MCF 10A (cell line): ENCODE measurements at regions of chr4 and their contacts with region 1.

Region 1: GRCh38 chr4:88533937-88534750 is 10.6 kb upstream of the PYURF start:
- DNase-seq: peak; percentile 61
- H3K4me3 Mint-ChIP-seq: no peak overlapping the region
- H3K27ac Mint-ChIP-seq: no peak overlapping the region
- H3K4me1 Mint-ChIP-seq: peaks cover 7% of the 10 kb centered on the region
- H3K27me3 Mint-ChIP-seq: no peaks in the 10 kb centered on the region
- CTCF ChIP-seq: no peak

Region 2: GRCh38 chr4:87540146-87541058 is 993.7 kb before region 1 on chr4:
- CTCF ChIA-PET with region 1: no interaction called
- POLR2A ChIA-PET with region 1: no interaction called
- intact Hi-C with region 1: no loop called
- DNase-seq: no peak
- H3K4me3 Mint-ChIP-seq: no peak overlapping the region
- H3K27ac Mint-ChIP-seq: no peak overlapping the region
- H3K4me1 Mint-ChIP-seq: no peaks in the 10 kb centered on the region
- H3K27me3 Mint-ChIP-seq: no peaks in the 10 kb centered on the region
- CTCF ChIP-seq: no peak

Region 3: DNA sequence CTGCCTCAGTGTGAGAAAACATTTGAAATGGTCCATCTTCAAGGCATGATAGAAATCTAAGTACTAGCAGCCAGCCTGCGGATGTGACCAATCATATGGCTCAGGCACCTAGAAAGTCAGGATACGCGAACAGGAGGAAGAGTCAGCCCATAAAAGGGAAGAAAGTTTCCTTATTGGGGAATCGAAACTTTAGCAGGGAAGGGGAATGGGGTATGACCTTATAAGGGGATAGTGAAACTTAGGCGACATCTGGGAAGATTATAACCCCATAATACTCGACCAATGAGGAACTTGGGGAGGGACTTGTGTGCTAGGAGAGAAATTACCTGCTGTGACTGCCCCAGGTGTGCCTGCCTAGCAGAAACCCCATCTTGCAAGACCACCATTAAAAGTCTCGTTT is 15.7 kb after region 1 on chr4:
- CTCF ChIA-PET with region 1: interaction called, 15 read pairs
- POLR2A ChIA-PET with region 1: no interaction called
- intact Hi-C with region 1: no loop called
- DNase-seq: no peak
- H3K4me3 Mint-ChIP-seq: no peak overlapping the region
- H3K27ac Mint-ChIP-seq: peak overlapping the region; percentile 71
- H3K4me1 Mint-ChIP-seq: no peaks in the 10 kb centered on the region
- H3K27me3 Mint-ChIP-seq: no peaks in the 10 kb centered on the region
- CTCF ChIP-seq: no peak

Region 4: DNA sequence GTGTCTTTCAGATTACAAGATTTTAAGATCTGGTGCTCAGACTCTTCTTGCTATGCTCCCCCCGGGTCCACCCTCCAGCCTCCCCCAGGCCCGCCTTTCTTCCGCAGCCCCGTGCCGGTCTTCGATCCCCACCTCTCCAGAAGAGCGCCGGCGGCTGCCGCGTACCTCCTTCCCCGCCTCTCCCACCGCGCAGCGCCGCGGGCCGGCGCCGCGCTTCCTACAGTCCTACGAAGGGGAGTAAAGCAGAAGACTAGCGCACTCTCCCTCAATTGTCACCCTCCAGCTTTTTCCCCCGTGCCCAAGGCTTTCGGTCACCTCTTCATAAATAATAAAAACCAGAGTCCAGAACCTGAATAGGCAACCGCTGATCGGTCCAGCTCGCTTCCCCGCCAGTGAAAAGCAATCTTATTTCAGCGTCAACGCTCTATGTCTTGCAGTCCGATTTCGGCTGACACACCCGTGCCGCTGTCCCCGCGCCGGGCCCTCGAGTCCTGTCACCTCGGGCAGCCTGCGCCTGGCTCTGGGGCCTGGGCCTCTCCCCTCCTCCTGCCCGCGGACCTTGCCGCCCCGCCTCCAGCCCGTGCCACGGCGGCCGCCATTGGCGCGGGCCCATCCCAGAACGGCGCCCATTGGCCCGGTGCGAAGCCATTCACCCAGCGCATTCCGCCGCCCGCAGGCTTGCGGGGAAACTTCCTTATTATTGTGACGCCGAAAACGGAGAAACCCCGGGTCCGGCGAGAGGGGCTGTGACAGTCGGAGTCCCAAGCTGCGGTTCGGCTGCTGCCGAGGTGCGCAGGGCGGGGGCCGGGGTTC is 57.8 kb after region 1 on chr4 and contains the start of gene HERC3:
- CTCF ChIA-PET with region 1: interaction called, 20 read pairs
- POLR2A ChIA-PET with region 1: interaction called, 10 read pairs
- intact Hi-C with region 1: loop called (anchors 2 kb)
- DNase-seq: peak; percentile 89
- H3K4me3 Mint-ChIP-seq: peak within 1 kb of the TSS; percentile 83
- H3K27ac Mint-ChIP-seq: peak within 1 kb of the TSS; percentile 77
- H3K4me1 Mint-ChIP-seq: peaks cover 6% of the 10 kb centered on the region
- H3K27me3 Mint-ChIP-seq: no peaks in the 10 kb centered on the region
- CTCF ChIP-seq: no peak
- total RNA-seq, gene HERC3: 34.9 and 64.0 TPM in 2 replicates

Region 5: GRCh38 chr4:88653371-88653946 is 119.3 kb after region 1 on chr4:
- CTCF ChIA-PET with region 1: interaction called, 27 read pairs
- POLR2A ChIA-PET with region 1: interaction called, 3 read pairs
- intact Hi-C with region 1: no loop called
- DNase-seq: no peak
- H3K4me3 Mint-ChIP-seq: no peak overlapping the region
- H3K27ac Mint-ChIP-seq: no peak overlapping the region
- H3K4me1 Mint-ChIP-seq: peaks cover 7% of the 10 kb centered on the region
- H3K27me3 Mint-ChIP-seq: no peaks in the 10 kb centered on the region
- CTCF ChIP-seq: no peak

Region 6: DNA sequence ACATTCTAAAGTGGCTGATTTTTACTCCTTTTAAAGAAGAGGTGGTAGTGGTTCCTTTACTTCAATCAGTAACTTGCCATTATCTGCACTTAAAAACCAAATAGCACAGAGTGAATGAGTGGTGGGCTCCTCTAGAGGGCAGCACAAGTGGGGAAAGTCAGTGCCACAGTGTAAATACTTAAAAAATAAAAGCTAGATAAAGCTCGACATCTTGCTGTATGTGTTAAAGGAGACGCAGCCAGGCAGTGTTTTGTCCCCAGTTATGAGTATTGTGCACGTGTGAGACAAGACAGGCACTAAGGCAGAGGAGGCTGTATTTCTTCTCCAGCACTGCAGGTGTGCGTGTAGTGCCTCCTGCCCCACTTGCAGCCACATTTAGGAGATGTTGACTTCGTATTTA is 138.8 kb after region 1 on chr4:
- CTCF ChIA-PET with region 1: interaction called, 16 read pairs
- POLR2A ChIA-PET with region 1: no interaction called
- intact Hi-C with region 1: no loop called
- DNase-seq: peak; percentile 33
- H3K4me3 Mint-ChIP-seq: no peak overlapping the region
- H3K27ac Mint-ChIP-seq: no peak overlapping the region
- H3K4me1 Mint-ChIP-seq: no peaks in the 10 kb centered on the region
- H3K27me3 Mint-ChIP-seq: no peaks in the 10 kb centered on the region
- CTCF ChIP-seq: peak; percentile 21